ENCODE measurements at regions of chr6 and their contacts with region 1.

Region 1: DNA sequence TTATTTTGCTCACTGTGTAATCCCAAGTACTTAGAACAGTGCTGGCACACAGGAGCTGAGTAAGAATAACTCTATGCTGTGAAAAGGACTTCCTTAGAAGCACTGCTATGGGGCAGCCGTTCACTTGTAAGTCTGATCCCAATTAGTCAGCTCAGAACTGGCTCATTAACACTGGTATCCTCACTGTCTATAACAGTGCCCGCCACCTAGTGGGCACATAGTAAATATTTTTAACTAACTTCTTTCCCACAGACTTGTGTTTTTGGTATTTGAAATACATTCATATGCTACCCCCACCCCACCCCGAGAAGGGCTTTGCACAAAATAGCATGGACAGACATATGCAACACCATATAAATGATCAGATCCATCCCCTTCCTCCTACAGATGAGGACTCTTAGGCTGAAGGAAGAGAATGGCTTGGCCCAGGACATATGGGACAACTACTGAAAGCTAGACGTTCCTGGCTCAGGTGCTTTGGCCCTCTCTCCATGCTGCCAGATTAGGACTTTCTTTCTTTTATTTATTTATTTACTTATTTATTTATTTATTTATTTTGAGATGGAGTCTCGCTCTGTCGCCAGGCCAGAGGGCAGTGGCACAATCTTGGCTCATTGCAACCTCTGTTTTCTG is 47.1 kb downstream of the DST start:
- DNase-seq: no peak
- ATAC-seq: peak; percentile 51
- H3K4me3 Mint-ChIP-seq: no peak overlapping the region
- H3K27ac Mint-ChIP-seq: no peak overlapping the region
- H3K4me1 Mint-ChIP-seq: peaks cover 26% of the 10 kb centered on the region
- H3K27me3 Mint-ChIP-seq: no peaks in the 10 kb centered on the region
- CTCF ChIP-seq: no peak

Region 2: DNA sequence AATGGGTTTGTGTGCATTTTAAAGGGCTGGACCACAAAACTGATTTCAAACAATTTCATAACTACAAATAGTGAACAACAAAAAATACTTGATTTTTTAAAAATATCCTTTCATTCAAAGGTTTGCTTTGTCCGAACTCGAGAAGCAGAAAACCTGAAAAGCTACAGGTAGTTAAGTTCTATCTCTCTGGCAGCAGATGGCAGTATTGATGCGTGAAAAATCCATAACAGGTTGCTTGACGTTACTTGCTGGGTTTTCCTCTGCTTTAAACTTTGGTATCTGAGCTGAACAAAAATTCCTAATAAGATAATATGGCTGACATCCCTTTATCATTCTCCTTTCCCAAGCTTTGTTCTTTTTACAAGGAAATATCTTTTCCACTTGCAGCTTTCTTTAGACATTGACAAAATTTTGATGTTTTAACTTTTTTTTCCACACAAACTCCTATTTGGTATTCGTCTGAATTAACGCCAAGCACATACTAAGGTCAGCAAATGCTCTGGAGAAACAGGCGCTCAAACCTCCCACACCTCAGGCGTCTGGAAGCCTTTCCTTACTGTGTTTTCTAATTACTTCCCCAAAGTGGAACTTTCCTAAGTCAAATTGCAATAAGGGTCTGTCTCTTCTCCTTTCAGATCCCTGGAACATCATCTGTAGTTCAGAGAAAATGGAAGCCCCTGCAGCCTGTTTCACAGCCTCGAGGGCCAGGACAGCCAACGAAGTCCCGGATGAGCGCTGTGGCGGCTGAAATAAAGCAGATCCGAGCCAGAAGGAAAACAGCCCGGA is 1318.7 kb before region 1 on chr6:
- CTCF ChIA-PET with region 1: no interaction called
- POLR2A ChIA-PET with region 1: no interaction called
- intact Hi-C with region 1: loop called (anchors 10 kb)
- DNase-seq: no peak
- ATAC-seq: no peak
- H3K4me3 Mint-ChIP-seq: no peak overlapping the region
- H3K27ac Mint-ChIP-seq: no peak overlapping the region
- H3K4me1 Mint-ChIP-seq: no peaks in the 10 kb centered on the region
- H3K27me3 Mint-ChIP-seq: no peaks in the 10 kb centered on the region
- CTCF ChIP-seq: no peak

Region 3: DNA sequence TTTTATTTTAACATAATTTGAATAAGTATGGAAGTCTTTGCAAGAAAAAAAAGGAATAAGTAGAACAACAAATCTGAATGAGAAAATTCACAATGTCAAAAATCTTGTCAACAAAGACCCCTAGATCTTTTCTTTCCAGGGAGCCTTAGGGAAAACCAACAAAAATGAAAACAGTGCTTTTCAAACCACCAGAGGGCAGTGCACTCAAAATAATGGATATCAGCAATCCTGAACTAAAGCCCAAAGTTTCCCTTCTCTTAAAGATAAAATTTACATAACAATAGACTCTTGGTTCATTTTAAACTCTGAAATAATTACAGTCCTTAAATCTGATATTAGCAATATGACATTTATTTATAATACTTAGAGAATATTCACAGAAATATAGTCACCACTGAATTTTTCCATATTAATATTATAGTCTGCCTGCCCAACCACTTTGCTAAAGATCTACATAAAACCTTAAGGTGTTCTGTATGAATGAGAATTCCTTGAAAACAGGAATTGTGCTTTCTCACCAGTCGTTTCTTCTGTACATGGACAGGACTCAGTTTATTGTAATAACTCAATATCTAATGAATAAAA is 614.9 kb before region 1 on chr6:
- CTCF ChIA-PET with region 1: no interaction called
- POLR2A ChIA-PET with region 1: no interaction called
- intact Hi-C with region 1: loop called (anchors 5 kb)
- DNase-seq: no peak
- ATAC-seq: no peak
- H3K4me3 Mint-ChIP-seq: no peak overlapping the region
- H3K27ac Mint-ChIP-seq: no peak overlapping the region
- H3K4me1 Mint-ChIP-seq: no peaks in the 10 kb centered on the region
- H3K27me3 Mint-ChIP-seq: no peaks in the 10 kb centered on the region
- CTCF ChIP-seq: no peak

Region 4: GRCh38 chr6:56542364-56543331 is 53.0 kb before region 1 on chr6:
- CTCF ChIA-PET with region 1: interaction called, 3 read pairs
- POLR2A ChIA-PET with region 1: no interaction called
- intact Hi-C with region 1: loop called (anchors 2 kb)
- DNase-seq: peak; percentile 42
- ATAC-seq: peak; percentile 86
- H3K4me3 Mint-ChIP-seq: no peak overlapping the region
- H3K27ac Mint-ChIP-seq: no peak overlapping the region
- H3K4me1 Mint-ChIP-seq: no peaks in the 10 kb centered on the region
- H3K27me3 Mint-ChIP-seq: peaks cover 2% of the 10 kb centered on the region
- CTCF ChIP-seq: no peak

Region 5: DNA sequence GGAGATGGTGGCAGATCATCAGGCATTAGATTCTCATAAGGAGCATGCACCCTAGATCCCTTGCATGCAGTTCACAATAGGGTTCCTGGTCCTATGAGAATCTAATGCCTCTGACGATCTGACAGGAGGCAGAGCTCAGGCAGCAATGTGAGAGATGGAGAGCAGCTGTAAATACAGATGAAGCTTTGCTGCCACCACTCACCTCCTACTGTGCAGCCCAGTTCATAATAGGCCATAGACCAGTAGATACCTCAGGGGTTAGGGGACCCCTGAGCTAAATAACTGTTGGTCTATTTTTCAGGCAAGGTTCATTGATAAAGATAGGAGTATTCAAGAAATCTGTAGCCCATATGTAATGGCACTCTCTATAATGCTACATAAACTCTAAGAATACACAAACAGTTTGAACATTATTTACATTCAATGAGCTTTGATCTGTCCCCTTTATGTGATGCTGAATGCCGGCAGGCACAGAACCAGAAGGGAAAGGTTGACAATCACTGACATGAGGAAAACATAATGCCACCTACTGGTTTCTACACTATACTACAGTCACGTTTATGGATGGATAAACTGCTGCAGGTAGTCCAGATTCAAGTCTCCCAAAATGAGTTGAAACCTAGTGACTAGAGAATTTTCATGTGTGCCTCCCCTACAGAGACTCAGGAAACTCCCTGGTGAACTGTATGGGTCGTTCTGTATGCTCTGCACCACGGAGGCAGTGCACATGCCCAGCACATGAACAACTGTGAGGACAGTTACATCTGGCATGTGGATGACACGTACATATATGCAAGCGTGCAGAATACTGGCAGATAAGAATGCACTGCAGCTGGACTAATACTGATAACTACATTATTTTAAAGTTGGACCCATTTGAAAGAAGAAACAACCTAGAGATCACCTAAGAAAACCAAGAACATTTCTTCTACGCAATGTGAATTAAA is 24.9 kb before region 1 on chr6:
- CTCF ChIA-PET with region 1: interaction called, 12 read pairs
- POLR2A ChIA-PET with region 1: interaction called, 3 read pairs
- intact Hi-C with region 1: loop called (anchors 2 kb)
- DNase-seq: no peak
- ATAC-seq: peak; percentile 37
- H3K4me3 Mint-ChIP-seq: no peak overlapping the region
- H3K27ac Mint-ChIP-seq: no peak overlapping the region
- H3K4me1 Mint-ChIP-seq: no peaks in the 10 kb centered on the region
- H3K27me3 Mint-ChIP-seq: no peaks in the 10 kb centered on the region
- CTCF ChIP-seq: peak; percentile 17

Region 6: GRCh38 chr6:56927538-56928453 is 332.2 kb after region 1 on chr6:
- CTCF ChIA-PET with region 1: no interaction called
- POLR2A ChIA-PET with region 1: no interaction called
- intact Hi-C with region 1: no loop called
- DNase-seq: no peak
- ATAC-seq: no peak
- H3K4me3 Mint-ChIP-seq: no peak overlapping the region
- H3K27ac Mint-ChIP-seq: no peak overlapping the region
- H3K4me1 Mint-ChIP-seq: no peaks in the 10 kb centered on the region
- H3K27me3 Mint-ChIP-seq: peaks cover 6% of the 10 kb centered on the region
- CTCF ChIP-seq: no peak